Right lobe of liver (tissue), 6 donors: ENCODE measurements at regions of chr3 and their contacts with region 1.

Region 1: DNA sequence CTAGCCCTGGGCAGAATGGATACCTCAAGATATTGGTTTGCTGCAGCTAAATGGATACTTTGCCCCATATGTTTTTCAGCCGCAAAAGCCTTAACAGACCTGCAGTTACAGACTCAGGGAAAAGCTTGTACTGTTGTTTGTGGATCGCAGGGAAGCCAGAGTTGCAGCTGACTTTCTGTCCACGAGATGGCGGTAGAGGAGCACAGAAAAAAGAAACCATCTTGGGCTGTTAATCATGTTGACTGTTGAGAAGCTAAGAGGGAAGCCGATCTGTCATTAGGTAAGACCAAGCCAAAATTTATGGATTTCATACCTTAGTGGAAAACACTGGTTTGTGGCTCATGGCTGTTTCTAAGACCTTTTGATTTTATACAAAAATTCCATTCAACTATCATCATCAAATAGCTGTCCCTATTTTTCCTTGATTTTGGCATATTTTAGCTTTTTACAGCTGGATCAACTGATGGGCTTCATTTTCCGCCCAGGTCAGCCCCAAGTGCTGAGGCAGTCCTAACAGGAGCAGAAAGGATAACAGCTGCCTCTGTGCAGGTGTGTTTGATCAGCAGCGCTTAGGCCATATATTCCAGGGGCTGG is 205.7 kb upstream of the ZPLD1 start:
- DNase-seq: peak in 2 of 3 donors; percentile 53 to 72
- ATAC-seq: peak; percentile 90 to 94 (median 92)
- H3K4me3 ChIP-seq: no peak overlapping the region
- H3K27ac ChIP-seq: no peak overlapping the region
- H3K4me1 ChIP-seq: no peaks in the 10 kb centered on the region
- H3K27me3 ChIP-seq: no peaks in the 10 kb centered on the region
- CTCF ChIP-seq: peak; percentile 94 to 97 (median 95)
- POLR2A ChIP-seq: no peak

Region 2: GRCh38 chr3:101809178-101810021 is 419.8 kb before region 1 on chr3:
- intact Hi-C with region 1: loop called (anchors 5 kb)
- DNase-seq: no peak
- ATAC-seq: peak; percentile 86 to 93 (median 88)
- H3K4me3 ChIP-seq: no peak overlapping the region
- H3K27ac ChIP-seq: no peak overlapping the region
- H3K4me1 ChIP-seq: peaks cover 0 to 13% (median 0%) of the 10 kb centered on the region in 4 donors
- H3K27me3 ChIP-seq: no peaks in the 10 kb centered on the region
- CTCF ChIP-seq: peak; percentile 71 to 84 (median 78)
- POLR2A ChIP-seq: no peak

Region 3: GRCh38 chr3:101936419-101937356 is 292.5 kb before region 1 on chr3:
- intact Hi-C with region 1: no loop called
- DNase-seq: no peak
- ATAC-seq: peak; percentile 39 to 73 (median 62)
- H3K4me3 ChIP-seq: no peak overlapping the region
- H3K27ac ChIP-seq: no peak overlapping the region
- H3K4me1 ChIP-seq: peaks cover 0 to 4% (median 0%) of the 10 kb centered on the region in 4 donors
- H3K27me3 ChIP-seq: no peaks in the 10 kb centered on the region
- CTCF ChIP-seq: no peak
- POLR2A ChIP-seq: no peak

Region 4: GRCh38 chr3:102434715-102435114 is 205.6 kb after region 1 on chr3 and contains the start of gene ZPLD1:
- intact Hi-C with region 1: no loop called
- DNase-seq: no peak
- ATAC-seq: no peak
- H3K4me3 ChIP-seq: no peak within 1 kb of the TSS
- H3K27ac ChIP-seq: no peak within 1 kb of the TSS
- H3K4me1 ChIP-seq: no peaks in the 10 kb centered on the region
- H3K27me3 ChIP-seq: no peaks in the 10 kb centered on the region
- CTCF ChIP-seq: no peak
- POLR2A ChIP-seq: no peak
- total RNA-seq, gene ZPLD1: 0.04 to 0.12 (median 0.07) TPM in 4 of 6 experiments, not detected in the others